ENCODE measurements at regions of chr2 and their contacts with region 1.

Region 1: GRCh38 chr2:137838255-137839092 is 125.8 kb upstream of the HNMT start:
- DNase-seq: no peak
- ATAC-seq: peak; percentile 63
- H3K4me3 ChIP-seq: no peak overlapping the region
- H3K4me1 ChIP-seq: no peaks in the 10 kb centered on the region
- CTCF ChIP-seq: no peak

Region 2: DNA sequence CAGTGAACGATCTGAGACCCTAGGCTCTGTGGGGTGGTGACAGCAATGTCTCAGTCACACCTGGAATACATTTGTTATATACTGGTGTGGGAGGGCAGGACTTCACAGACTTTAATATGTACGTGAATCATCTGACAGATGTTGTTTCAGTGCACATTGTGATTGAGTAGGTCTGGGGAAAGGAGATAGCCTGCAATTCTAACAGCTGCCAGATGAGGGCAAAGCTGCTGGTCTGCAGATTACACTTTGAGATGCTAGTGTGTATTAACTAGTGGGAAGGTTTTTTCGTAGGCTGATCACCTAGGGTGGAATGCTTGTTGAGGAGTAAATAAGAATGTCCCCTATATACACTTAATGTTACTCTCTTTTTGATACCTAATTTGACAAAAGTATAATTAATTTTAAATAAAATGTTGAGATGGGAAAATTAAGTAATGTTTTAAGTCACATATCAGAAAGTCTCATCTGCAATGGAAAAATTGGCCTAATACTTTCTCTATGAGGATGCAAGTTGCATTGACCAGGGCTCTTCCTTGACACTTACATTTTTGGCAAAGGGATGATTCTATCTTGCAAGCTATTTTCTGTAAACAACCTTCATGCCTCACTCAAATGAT is 371.1 kb before region 1 on chr2:
- intact Hi-C with region 1: loop called in 1 of 2 experiments (anchors 10 kb)
- DNase-seq: peak in 1 of 3 donors; percentile 75
- ATAC-seq: peak; percentile 79
- H3K4me3 ChIP-seq: no peak overlapping the region
- H3K4me1 ChIP-seq: no peaks in the 10 kb centered on the region
- CTCF ChIP-seq: peak; percentile 45

Measured in mucosa of descending colon (tissue), 3 donors.